Adrenal gland (tissue), 19 donors: ENCODE measurements at regions of chr13 and their contacts with region 1.

Region 1: GRCh38 chr13:99501184-99501847 is at the start of gene TM9SF2:
- DNase-seq: peak; percentile 96 to 99 (median 97)
- H3K4me3 ChIP-seq: peak within 1 kb of the TSS; percentile 57 to 95 (median 75)
- H3K27ac ChIP-seq: peak within 1 kb of the TSS; percentile 64 to 90 (median 83)
- H3K4me1 ChIP-seq: peaks cover 13 to 60% of the 10 kb centered on the region in 2 donors
- H3K27me3 ChIP-seq: no peaks in the 10 kb centered on the region
- CTCF ChIP-seq: peak in 1 of 6 experiments; percentile 27
- POLR2A ChIP-seq: peak; percentile 78 to 81
- total RNA-seq, gene TM9SF2: 100 to 153 (median 116) TPM

Region 2: DNA sequence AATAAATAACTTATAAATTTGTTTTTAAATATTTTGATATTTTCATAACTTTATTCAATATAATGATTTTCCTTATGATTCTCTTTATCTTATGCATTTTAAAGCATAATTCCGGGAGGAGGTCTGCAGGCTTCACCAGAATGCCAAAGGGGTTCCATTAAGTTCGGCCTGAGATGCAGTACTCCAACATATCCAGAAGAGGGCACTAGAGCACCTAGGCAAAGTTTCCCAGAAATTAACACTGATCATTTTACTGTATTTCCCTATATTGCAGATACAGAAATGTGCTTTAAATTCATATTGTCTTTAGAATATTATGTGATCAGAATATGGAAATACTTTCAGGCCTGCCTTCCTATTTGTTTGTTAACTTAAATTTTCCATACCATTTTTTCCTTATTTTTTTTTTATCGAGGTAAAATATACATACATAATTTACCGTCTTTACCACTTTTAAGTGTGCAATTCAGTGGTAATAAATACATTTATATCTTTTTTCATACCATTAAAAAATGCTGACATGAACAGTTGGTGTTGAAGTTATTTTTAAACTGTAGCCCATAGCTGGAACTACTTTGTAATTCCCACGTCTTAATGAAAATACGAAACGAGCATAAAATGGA is 58.9 kb before region 1 on chr13:
- intact Hi-C with region 1: loop called in 1 of 2 experiments (anchors 10 kb)
- DNase-seq: peak in 4 of 7 donors; percentile 47 to 73 (median 58)
- H3K4me3 ChIP-seq: no peak overlapping the region
- H3K27ac ChIP-seq: no peak overlapping the region
- H3K4me1 ChIP-seq: no peaks in the 10 kb centered on the region
- H3K27me3 ChIP-seq: peaks cover 15% of the 10 kb centered on the region
- CTCF ChIP-seq: peak; percentile 79 to 98 (median 89)
- POLR2A ChIP-seq: no peak

Region 3: DNA sequence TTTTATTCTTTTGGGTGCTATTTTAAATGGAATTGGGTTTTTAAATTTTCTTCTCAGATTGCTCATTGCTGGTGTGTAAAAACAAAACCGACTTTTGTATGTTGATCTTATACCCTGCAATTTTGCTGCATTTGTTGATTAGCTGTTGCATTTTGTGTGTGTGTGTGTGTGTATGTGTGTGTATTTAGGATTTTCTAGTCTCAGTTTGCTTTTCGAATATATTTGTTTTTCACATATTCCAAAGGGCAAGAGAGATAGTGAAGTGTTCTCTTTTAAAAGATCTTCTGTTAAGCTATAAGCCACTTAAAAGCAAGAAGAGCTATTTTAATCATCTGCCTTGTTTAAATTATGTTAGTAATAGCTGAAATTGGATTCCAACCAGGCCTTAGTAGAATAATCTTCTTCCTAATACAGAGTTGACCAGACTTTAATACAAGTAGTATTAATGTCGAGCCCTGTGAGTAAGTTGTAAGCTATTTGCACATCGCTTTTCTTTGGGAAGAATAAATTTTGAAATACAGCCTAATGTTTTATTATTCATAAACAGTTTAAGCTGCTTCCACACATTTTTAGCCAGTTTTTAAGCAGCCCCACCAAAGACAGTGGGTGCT is 57.4 kb after region 1 on chr13:
- intact Hi-C with region 1: loop called in 1 of 2 experiments (anchors 10 kb)
- DNase-seq: no peak
- H3K4me3 ChIP-seq: no peak overlapping the region
- H3K27ac ChIP-seq: no peak overlapping the region
- H3K4me1 ChIP-seq: peaks cover 0 to 6% of the 10 kb centered on the region in 2 donors
- H3K27me3 ChIP-seq: no peaks in the 10 kb centered on the region
- CTCF ChIP-seq: no peak
- POLR2A ChIP-seq: no peak